Endothelial cell of umbilical vein (primary cell): ENCODE measurements at regions of chr21 and their contacts with region 1.

Region 1: DNA sequence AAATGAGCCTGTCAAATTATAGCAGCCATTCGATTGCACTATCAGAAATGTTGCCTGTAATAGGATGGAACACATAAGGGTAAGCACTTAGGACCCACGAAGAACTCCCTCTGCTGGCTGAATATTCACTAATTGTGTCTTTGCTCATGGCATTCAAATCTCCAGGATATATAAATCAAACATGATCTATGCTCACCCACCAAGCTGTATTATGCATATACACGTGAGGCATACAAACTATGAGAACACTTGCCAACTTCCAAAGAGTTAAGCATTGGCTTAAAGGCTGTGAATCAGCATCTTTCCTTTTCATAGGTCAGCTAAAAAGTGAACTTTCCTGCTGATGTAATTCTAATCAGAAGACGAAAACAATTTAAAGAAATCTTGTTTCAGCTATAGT is 34.5 kb downstream of the TMPRSS15 start:
- DNase-seq: peak; percentile 1
- H3K4me3 ChIP-seq: no peak overlapping the region
- H3K27ac ChIP-seq: no peak overlapping the region
- H3K4me1 ChIP-seq: no peaks in the 10 kb centered on the region
- H3K27me3 ChIP-seq: no peaks in the 10 kb centered on the region
- CTCF ChIP-seq: no peak
- POLR2A ChIP-seq: no peak

Region 2: DNA sequence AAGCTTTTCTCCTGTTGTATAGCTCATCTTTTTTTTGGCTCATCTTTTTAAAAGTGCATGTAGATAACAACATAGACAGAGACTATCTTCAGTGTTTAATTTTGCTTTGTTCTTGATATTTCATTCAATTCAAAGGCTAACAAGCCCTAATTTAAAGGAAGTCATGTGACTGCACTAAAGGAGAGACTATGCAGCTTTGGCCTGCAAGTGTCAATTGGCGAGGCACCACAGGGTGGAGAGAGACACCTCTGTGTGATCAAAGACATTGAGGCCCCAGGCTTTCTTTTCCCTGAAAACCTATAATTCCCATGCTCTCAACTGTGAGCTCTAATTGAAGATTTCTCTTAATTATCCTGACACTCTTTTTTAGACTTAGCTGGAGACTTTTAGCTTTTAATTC is 70.9 kb before region 1 on chr21:
- CTCF ChIA-PET with region 1: no interaction called
- POLR2A ChIA-PET with region 1: no interaction called
- dilution Hi-C with region 1: no loop called
- intact Hi-C with region 1: loop called (anchors 1 kb)
- DNase-seq: no peak
- H3K4me3 ChIP-seq: no peak overlapping the region
- H3K27ac ChIP-seq: no peak overlapping the region
- H3K4me1 ChIP-seq: no peaks in the 10 kb centered on the region
- H3K27me3 ChIP-seq: no peaks in the 10 kb centered on the region
- CTCF ChIP-seq: no peak
- POLR2A ChIP-seq: no peak